ENCODE measurements at regions of chr4 and their contacts with region 1.

Region 1: DNA sequence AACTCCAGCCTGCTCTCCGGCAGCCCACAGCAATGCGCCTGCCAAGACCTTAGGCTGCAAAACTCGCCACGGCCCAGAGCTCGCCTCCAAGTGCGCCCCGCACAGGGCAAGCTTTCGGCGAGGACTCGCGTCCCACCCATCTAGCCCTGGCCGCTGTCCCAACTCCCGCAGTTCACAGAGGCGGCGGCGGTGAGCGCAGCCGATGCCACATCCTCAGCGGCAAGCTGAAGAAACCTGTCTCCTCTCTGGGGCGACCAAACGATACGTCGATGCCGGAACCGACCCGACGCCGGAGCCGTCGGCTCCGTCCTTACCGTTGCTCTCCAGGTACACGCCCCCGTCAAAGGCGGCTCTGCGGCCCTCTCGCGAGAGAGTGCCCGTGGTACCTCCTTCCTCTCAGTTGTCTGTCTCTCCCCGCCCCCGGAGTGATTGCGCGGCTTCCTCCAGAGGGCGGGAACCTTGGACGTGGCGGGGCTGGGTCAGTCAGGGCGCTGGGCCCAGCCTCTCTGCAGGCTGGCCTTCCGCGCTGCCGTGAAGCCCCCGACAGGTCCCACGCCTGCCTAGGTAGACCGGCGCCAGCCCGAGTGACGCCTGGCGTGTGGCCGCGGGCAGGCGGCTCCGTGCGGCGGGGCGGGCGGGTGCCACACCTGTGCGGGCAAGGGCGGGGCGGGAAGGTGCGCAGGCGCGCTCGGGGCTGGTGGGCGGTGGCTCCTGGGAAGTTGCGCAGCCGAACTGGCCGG is 380 bp upstream of the RAB33B start:
- DNase-seq: peak; percentile 88 to 97
- H3K4me3 ChIP-seq: peak overlapping the region; percentile 67 to 96 (median 84)
- H3K27ac ChIP-seq: peak overlapping the region; percentile 83
- H3K4me1 ChIP-seq: peaks cover 0 to 12% (median 3%) of the 10 kb centered on the region in 4 experiments; a peak in 5 of 7 replicates
- H3K27me3 ChIP-seq: no peaks in the 10 kb centered on the region
- CTCF ChIP-seq: no peak; a peak in 1 of 4 replicates
- EP300 ChIP-seq: no peak
- POLR2A ChIP-seq: peak in 1 of 2 experiments; percentile 69; a peak in 2 of 3 replicates
- RAD21 ChIP-seq: no peak

Region 2: GRCh38 chr4:139441029-139441428 is 12.5 kb before region 1 on chr4:
- CTCF ChIA-PET with region 1: interaction called, 6 read pairs
- POLR2A ChIA-PET with region 1: interaction called, 21 read pairs
- DNase-seq: no peak
- H3K4me3 ChIP-seq: no peak overlapping the region
- H3K27ac ChIP-seq: no peak overlapping the region
- H3K4me1 ChIP-seq: no peaks in the 10 kb centered on the region
- H3K27me3 ChIP-seq: no peaks in the 10 kb centered on the region
- CTCF ChIP-seq: no peak
- EP300 ChIP-seq: no peak
- POLR2A ChIP-seq: no peak
- RAD21 ChIP-seq: no peak

Measured in H1 (cell line).